AG04450 (cell line): ENCODE measurements at regions of chr10 and their contacts with region 1.

Region 1: DNA sequence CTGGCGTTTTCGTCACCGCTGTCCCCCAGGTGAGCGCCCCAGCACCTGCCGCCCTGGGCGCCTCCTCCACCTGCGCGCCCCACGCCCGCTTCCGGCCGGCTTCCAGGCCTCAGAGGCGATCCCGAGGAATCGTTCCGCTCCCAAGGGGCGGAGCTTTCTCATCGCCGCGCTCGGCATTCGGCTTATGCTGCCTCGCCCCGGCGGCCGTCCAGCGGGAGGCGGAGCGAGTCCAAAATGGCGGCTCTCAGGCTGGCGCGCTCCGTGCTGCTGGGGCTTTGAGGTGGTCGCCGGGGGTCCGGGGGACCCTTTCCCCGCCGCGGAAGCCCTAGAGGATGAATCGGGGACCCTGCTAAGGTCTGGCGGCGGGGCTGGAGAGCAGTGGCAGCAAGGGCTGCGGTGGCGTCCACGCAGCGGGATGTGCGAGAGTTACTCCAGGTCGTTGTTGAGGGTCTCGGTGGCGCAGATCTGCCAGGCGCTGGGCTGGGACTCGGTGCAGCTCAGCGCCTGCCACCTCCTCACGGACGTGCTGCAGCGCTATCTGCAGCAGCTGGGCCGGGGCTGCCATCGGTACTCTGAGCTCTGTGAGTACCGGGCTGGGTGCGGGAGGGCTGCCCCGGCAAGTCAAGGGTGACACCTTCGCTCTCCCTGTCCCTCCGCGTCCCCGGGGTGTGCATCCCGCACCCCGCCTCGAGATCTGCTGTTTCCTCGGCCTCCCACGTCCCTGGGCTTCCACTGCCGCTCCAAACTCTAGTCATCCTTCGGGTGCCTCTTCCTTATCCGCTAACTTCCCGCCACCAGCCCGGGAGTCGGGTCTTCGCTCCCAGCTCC is at the start of gene TAF3:
- DNase-seq: peak; percentile 44
- H3K4me3 ChIP-seq: peak within 1 kb of the TSS; percentile 99
- H3K27ac ChIP-seq: no peak within 1 kb of the TSS
- H3K27me3 ChIP-seq: peaks cover 11% of the 10 kb centered on the region
- CTCF ChIP-seq: no peak
- polyA plus RNA-seq, gene TAF3: 2.3 and 3.1 TPM in 2 replicates

Region 2: GRCh38 chr10:7634142-7634894 is 184.2 kb before region 1 on chr10:
- CTCF ChIA-PET with region 1: no interaction called
- POLR2A ChIA-PET with region 1: no interaction called
- DNase-seq: no peak
- H3K4me3 ChIP-seq: no peak overlapping the region
- H3K27ac ChIP-seq: no peak overlapping the region
- H3K27me3 ChIP-seq: no peaks in the 10 kb centered on the region
- CTCF ChIP-seq: no peak

Region 3: DNA sequence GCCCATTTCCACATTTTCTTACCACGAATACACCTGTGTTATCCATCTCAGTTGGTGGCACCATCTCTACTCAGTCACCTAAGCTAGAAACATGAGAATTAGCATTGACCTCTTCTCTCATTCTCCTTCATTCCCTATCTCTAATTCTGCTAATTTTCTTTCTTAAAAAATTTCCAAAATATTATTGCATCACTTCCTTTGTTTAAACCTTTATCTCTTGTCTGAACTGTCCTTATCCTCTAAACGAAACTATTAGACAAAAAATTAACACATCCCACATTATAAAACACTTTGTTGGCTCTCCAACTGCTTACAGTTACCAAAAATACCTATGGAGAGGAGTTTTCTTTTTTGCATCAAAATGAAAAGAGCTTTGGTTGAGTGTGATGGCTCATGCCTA is 18.1 kb after region 1 on chr10:
- CTCF ChIA-PET with region 1: no interaction called
- POLR2A ChIA-PET with region 1: no interaction called
- DNase-seq: no peak
- H3K4me3 ChIP-seq: no peak overlapping the region
- H3K27ac ChIP-seq: no peak overlapping the region
- H3K27me3 ChIP-seq: no peaks in the 10 kb centered on the region
- CTCF ChIP-seq: no peak

Region 4: GRCh38 chr10:7908541-7909210 is 90.2 kb after region 1 on chr10:
- CTCF ChIA-PET with region 1: no interaction called
- POLR2A ChIA-PET with region 1: no interaction called
- DNase-seq: no peak
- H3K4me3 ChIP-seq: no peak overlapping the region
- H3K27ac ChIP-seq: no peak overlapping the region
- H3K27me3 ChIP-seq: no peaks in the 10 kb centered on the region
- CTCF ChIP-seq: no peak

Region 5: GRCh38 chr10:8174772-8175171 is 356.3 kb after region 1 on chr10:
- CTCF ChIA-PET with region 1: no interaction called
- POLR2A ChIA-PET with region 1: no interaction called
- DNase-seq: no peak
- H3K4me3 ChIP-seq: no peak overlapping the region
- H3K27ac ChIP-seq: no peak overlapping the region
- H3K27me3 ChIP-seq: no peaks in the 10 kb centered on the region
- CTCF ChIP-seq: no peak

Region 6: GRCh38 chr10:9302120-9302746 is 1483.7 kb after region 1 on chr10:
- CTCF ChIA-PET with region 1: interaction called, 11 read pairs
- POLR2A ChIA-PET with region 1: no interaction called
- DNase-seq: peak; percentile 21
- H3K4me3 ChIP-seq: no peak overlapping the region
- H3K27ac ChIP-seq: no peak overlapping the region
- H3K27me3 ChIP-seq: no peaks in the 10 kb centered on the region
- CTCF ChIP-seq: peak; percentile 41